Sciatic nerve (tissue), 2 donors: ENCODE measurements at regions of chr14 and their contacts with region 1.

Region 1: DNA sequence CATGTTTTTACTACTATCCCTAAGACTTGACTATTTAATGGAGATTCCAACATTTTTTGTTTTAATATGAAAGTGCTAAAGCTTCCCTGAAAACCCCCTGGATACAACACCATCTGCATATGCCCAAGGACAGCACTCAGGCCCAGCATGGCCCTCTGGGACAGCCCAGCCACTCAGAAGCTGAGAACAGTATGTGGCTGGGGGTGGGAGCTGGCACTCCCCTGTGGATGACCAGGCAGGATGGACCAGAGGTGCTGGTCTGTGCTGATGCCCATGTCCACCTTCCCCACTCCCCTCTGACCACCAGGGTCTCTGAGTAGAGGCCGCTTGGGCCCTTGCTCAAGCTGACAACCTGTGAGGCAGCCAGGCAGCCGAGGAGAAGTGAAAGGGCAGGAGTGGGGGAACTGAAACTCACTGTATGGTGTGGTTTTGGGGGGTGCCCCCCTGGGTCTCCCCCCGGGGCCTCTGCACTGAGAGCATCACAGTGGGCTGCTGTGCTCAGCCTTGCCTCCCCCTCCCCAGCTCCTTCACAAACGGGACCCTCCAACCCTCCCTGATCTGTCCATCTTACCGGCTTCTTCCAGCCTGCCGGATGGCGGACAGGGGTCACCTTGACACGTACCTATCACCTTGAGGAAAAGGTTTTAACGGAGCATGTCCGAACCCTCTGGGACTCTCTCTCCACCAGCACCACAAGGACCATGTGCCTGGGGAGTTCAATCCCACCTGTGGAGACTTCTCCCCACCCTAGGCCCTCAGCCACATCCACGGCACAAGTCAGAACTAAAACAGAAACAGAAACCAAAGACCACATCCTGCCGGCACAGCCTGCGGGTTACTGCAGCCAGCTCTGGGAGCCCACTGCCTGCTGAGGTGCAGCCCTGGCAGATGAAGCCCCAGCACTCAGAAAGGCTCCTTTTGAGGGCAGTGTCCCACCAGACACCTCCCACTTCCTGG is at the start of gene TMEM229B:
- DNase-seq: no peak
- ATAC-seq: peak; percentile 71
- total RNA-seq, gene TMEM229B: 2.9 TPM

Region 2: DNA sequence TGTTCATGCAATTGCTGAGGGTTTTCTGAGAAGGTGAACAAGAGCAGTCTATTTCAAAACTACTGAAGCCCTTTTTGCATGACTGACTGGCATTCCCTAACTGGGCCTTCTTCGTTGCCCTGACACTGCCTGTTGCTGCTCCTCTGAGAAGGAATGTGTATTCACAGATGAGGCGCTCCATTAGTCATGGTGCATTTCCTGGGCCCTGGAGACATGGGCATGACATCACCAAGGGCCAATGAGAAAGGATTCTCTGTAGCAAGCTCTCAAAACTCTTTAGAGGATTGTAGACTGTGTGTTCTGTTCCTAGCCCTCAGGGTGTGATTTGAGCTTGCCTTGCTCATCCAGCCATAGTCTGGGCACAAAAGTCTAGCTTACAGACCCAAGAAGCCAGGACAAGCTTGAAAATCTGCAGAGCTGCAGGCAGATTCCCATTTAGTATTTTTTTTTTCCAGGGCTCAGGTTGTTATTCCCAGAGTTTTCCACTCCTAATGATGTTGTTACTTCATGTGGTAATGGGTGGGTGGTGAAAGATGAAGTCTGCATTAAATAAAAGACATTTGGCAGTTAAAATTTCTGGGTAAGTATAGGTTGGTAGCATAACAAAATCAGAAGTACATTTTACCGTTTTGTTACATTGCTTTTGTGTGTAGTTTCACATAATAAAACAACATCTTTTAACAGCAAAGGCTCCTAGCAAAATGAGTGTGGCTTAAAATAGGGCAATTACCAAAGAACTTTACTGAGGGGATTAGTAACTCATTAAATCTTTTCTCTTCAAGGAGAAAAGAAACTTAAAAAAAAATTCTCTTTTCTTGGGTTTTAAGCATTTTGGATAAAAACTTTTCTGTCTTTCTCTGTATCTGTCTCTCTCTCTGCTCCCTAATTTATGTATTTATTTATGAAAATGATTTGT is 649.7 kb after region 1 on chr14:
- intact Hi-C with region 1: no loop called
- DNase-seq: no peak
- ATAC-seq: peak; percentile 71

Region 3: GRCh38 chr14:69013943-69014775 is 1525.9 kb after region 1 on chr14:
- intact Hi-C with region 1: loop called (anchors 5 kb)
- DNase-seq: no peak
- ATAC-seq: peak; percentile 46